Panc1 (cell line): ENCODE measurements at regions of chr19 and their contacts with region 1.

Region 1: GRCh38 chr19:40285353-40286234 is 449 bp upstream of the AKT2 start:
- DNase-seq: peak; percentile 100
- ATAC-seq: peak; percentile 96
- H3K4me3 ChIP-seq: peak overlapping the region; percentile 36 to 47
- H3K27ac ChIP-seq: peak overlapping the region; percentile 89
- H3K4me1 ChIP-seq: peaks cover 51% of the 10 kb centered on the region
- H3K27me3 ChIP-seq: no peaks in the 10 kb centered on the region
- CTCF ChIP-seq: no peak

Region 2: GRCh38 chr19:39372047-39372802 is 913.4 kb before region 1 on chr19:
- CTCF ChIA-PET with region 1: no interaction called
- POLR2A ChIA-PET with region 1: interaction called, 11 read pairs
- in situ Hi-C with region 1: no loop called
- intact Hi-C with region 1: no loop called
- DNase-seq: no peak
- ATAC-seq: peak; percentile 2
- H3K4me3 ChIP-seq: no peak overlapping the region
- H3K27ac ChIP-seq: no peak overlapping the region
- H3K4me1 ChIP-seq: no peaks in the 10 kb centered on the region
- H3K27me3 ChIP-seq: no peaks in the 10 kb centered on the region
- CTCF ChIP-seq: no peak

Region 3: DNA sequence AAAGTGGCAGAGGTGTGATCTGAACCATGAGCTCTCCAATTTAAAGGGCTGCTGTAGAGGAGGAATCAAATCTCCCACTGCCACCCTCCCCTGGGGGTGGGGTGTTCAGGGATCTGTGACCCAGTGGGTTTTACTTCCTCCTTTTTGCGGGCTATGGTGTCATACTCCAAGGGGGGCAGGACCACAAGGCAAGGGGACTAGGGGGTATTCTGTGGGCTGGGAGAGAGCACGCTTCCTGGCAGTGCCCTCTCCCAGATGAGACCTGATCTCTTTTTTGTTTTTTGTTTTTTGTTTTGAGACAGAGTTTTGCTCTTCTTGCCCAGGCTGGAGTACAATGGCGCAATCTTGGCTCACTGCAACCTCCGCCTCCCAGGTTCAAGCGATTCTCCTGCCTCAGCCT is 73.2 kb after region 1 on chr19:
- CTCF ChIA-PET with region 1: no interaction called
- POLR2A ChIA-PET with region 1: no interaction called
- in situ Hi-C with region 1: no loop called
- intact Hi-C with region 1: no loop called
- DNase-seq: no peak
- ATAC-seq: no peak
- H3K4me3 ChIP-seq: no peak overlapping the region
- H3K27ac ChIP-seq: no peak overlapping the region
- H3K4me1 ChIP-seq: peaks cover 4% of the 10 kb centered on the region; the same call in 1 of the 2 replicates
- H3K27me3 ChIP-seq: no peaks in the 10 kb centered on the region
- CTCF ChIP-seq: no peak